ENCODE measurements at regions of chrX and their contacts with region 1.

Region 1: GRCh38 chrX:78725287-78725686 is 22.2 kb upstream of the LPAR4 start:
- DNase-seq: no peak
- H3K4me3 ChIP-seq: no peak overlapping the region
- H3K27ac ChIP-seq: no peak overlapping the region
- H3K4me1 ChIP-seq: no peaks in the 10 kb centered on the region
- H3K27me3 ChIP-seq: no peaks in the 10 kb centered on the region
- CTCF ChIP-seq: no peak

Region 2: DNA sequence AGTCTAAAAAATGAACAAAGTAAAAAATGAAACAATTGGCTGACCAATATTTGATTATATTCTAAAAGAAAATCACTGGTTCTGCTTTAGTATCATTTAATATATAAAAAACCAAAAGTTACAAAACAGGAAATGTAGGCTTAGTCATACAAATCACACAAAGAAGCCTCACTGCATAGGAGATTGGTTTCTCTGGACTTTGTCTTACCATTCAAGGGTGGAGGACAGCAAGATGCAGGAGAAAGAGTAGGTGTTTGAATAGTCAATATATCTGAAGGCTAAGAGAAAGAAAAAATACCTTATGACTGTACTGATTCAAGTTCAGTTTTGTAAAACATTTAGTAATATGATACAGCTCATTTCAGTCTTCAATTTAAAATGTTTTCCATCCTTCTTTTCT is 557.2 kb before region 1 on chrX:
- intact Hi-C with region 1: loop called (anchors 10 kb)
- DNase-seq: no peak
- H3K4me3 ChIP-seq: no peak overlapping the region
- H3K27ac ChIP-seq: no peak overlapping the region
- H3K4me1 ChIP-seq: no peaks in the 10 kb centered on the region
- H3K27me3 ChIP-seq: no peaks in the 10 kb centered on the region
- CTCF ChIP-seq: no peak

Region 3: DNA sequence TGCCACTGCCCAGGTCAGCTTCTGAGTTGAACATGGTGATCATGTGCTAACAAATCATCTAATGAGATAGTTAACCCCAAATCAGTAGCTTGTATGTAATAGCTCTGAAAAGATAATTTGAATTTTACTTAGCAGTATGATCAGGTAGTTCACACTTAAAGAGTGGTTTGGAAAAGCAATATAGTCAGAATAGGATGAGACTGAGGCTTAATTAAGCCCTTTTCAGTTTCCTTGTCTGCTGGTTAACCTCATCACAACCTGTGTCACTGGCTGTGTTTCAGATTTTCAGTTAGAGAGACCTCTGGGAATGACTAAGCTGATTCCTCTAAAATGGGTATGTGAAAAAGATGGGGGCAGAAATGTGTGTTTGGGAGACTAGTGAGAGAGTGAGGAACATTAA is 457.3 kb after region 1 on chrX:
- intact Hi-C with region 1: no loop called
- DNase-seq: no peak
- H3K4me3 ChIP-seq: no peak overlapping the region
- H3K27ac ChIP-seq: no peak overlapping the region
- H3K4me1 ChIP-seq: no peaks in the 10 kb centered on the region
- H3K27me3 ChIP-seq: no peaks in the 10 kb centered on the region
- CTCF ChIP-seq: no peak

Measured in tibial artery (tissue), 4 donors.